Activated CD4-positive, alpha-beta T cell treated with anti-CD3 and anti-CD28 coated beads, Interleukin-2, amount 10 ng/mL, durations not matched to agents 24 days and 14 days (primary cell): ENCODE measurements at regions of chr5 and their contacts with region 1.

Region 1: DNA sequence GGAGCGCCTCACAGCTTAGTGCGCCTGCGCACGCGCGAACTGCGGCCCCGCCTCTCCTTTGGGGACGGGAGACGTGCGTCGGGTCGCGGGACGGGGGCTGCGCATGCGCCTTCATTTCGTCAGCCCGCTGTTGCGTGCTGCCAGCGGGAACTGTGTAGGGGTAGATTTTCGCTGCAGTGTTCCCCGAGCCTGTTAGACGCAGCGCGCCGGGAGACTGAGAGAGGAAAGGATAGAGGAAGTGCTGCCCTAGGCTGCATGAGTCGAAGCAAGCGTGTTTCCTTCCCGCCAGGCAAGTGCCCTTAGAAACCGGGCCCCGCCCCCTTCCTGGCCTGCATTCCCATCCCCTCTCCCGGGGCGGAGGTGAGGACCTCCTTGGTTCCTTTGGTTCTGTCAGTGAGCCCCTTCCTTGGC is 12.3 kb downstream of the ITGA1 start:
- DNase-seq: no peak
- H3K4me3 Mint-ChIP-seq: peak overlapping the region; percentile 96
- H3K27ac Mint-ChIP-seq: peak overlapping the region; percentile 95
- H3K4me1 Mint-ChIP-seq: peaks cover 44% of the 10 kb centered on the region
- H3K27me3 Mint-ChIP-seq: peaks cover 5% of the 10 kb centered on the region

Region 2: GRCh38 chr5:52725065-52725746 is 74.8 kb before region 1 on chr5:
- intact Hi-C with region 1: loop called (anchors 2 kb)
- DNase-seq: peak; percentile 93
- H3K4me3 Mint-ChIP-seq: peak overlapping the region; percentile 69
- H3K27ac Mint-ChIP-seq: peak overlapping the region; percentile 90
- H3K4me1 Mint-ChIP-seq: peaks cover 50% of the 10 kb centered on the region
- H3K27me3 Mint-ChIP-seq: no peaks in the 10 kb centered on the region

Region 3: DNA sequence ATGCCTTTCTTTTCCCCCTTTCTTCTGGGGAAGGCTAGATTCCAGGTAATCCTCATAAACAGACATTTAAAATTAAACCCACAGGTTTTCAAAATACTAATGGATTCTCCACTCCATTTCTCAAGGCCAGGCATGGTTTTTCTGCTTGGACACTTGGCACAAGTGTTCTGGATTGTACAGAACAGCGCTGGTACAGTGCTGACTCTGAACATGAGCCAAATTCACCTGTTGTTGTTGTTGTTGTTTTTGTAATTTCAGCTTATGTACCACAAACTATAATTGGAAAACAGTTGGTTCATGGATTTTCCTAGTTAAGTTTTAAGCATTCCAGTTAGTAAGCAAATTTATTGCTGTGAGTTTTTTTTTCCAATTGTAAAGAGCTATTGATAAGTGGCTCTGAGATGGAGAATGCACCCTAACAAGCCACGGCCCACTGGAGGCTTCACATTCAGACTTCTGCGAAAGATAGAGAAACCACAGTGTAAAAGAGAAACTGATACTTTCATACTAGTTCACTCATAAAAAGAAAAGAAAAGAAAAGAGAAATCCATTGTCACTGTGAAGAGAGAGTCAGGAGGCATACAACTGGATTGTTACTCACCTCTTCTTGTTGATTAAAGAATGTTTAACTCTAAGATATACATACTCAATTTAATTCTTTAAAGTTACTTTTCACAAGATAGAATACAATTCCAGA is 28.5 kb before region 1 on chr5:
- intact Hi-C with region 1: loop called (anchors 1 kb)
- DNase-seq: peak; percentile 85
- H3K4me3 Mint-ChIP-seq: peak overlapping the region; percentile 62
- H3K27ac Mint-ChIP-seq: peak overlapping the region; percentile 71
- H3K4me1 Mint-ChIP-seq: peaks cover 54% of the 10 kb centered on the region
- H3K27me3 Mint-ChIP-seq: no peaks in the 10 kb centered on the region

Region 4: DNA sequence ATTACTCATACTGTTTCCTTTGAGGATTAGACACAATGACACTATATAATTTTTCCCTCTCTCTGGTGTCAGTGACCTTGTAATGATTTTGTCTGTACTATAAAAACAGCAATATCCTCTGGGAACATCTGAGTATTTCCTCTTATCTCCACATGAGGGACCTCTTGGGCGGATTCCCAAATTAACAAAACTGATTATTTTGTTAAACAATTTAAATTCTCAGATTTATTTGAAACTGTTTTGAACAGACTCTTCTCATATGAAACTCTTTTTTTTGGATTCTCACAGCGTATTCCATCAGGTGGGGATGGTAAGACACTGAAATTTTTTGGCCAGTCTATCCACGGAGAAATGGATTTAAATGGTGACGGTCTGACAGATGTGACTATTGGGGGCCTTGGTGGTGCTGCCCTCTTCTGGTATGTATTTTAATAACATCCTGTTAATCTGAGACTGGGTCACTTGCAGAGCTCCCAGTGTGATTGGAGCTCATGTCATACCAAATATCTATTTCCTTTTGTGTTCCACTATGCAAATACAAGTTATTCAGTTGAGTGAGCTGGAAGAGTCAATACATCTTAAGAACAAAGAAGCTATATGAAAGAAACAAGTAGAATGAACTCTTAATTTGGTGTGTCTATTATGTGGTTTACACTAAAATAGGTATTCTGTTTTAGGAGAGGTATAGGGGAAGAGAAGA is 115.3 kb after region 1 on chr5:
- intact Hi-C with region 1: loop called (anchors 5 kb)
- DNase-seq: peak; percentile 87
- H3K4me3 Mint-ChIP-seq: peak overlapping the region; percentile 57
- H3K27ac Mint-ChIP-seq: no peak overlapping the region
- H3K4me1 Mint-ChIP-seq: peaks cover 8% of the 10 kb centered on the region
- H3K27me3 Mint-ChIP-seq: peaks cover 10% of the 10 kb centered on the region